Activated CD8-positive, alpha-beta T cell treated with anti-CD3 and anti-CD28 coated beads for 36 hours (primary cell): ENCODE measurements at regions of chr17 and their contacts with region 1.

Region 1: DNA sequence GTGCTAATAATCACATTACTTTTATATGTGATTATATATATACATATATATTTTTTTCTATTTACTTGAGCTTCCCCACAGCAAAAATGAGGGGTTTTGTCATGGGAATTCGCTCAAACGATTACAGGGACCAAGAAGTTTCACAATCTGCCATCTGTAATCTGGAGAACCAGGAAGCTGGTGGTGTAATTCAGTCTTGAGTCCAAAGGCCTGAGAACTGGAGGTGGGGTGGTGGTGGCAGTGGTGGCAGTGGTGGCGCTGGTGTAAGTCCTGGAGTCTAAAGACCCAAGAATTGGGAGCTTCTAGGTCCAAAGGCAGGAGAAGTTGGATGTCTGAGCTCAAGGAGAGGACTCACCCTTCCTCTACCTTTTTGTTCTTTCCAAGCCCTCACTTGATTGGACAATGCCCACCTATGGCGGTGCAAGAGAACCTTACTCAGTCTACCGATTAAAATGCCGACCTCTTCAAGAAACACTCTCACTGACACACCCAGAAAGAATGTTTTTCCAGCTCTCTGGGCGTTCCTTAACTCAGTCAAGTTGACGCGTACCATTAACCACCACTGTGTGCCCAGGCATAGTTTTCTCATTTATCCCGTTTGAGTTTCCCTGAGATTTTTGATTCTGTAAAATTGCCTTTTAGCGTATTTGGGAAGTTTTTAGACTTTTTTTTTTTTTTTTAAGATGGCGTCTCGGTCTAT is 31.9 kb downstream of the POLR2A start:
- DNase-seq: no peak
- ATAC-seq: no peak
- H3K4me3 Mint-ChIP-seq: no peak overlapping the region
- H3K27ac Mint-ChIP-seq: no peak overlapping the region
- H3K4me1 Mint-ChIP-seq: no peaks in the 10 kb centered on the region
- H3K27me3 Mint-ChIP-seq: no peaks in the 10 kb centered on the region
- CTCF ChIP-seq: no peak

Region 2: GRCh38 chr17:7491583-7491982 is 24.5 kb before region 1 on chr17:
- CTCF ChIA-PET with region 1: interaction called, 23 read pairs
- POLR2A ChIA-PET with region 1: interaction called, 4 read pairs
- intact Hi-C with region 1: no loop called
- DNase-seq: no peak
- ATAC-seq: no peak
- H3K4me3 Mint-ChIP-seq: no peak overlapping the region
- H3K27ac Mint-ChIP-seq: peak overlapping the region; percentile 40
- H3K4me1 Mint-ChIP-seq: peaks cover 57% of the 10 kb centered on the region
- H3K27me3 Mint-ChIP-seq: no peaks in the 10 kb centered on the region
- CTCF ChIP-seq: no peak

Region 3: DNA sequence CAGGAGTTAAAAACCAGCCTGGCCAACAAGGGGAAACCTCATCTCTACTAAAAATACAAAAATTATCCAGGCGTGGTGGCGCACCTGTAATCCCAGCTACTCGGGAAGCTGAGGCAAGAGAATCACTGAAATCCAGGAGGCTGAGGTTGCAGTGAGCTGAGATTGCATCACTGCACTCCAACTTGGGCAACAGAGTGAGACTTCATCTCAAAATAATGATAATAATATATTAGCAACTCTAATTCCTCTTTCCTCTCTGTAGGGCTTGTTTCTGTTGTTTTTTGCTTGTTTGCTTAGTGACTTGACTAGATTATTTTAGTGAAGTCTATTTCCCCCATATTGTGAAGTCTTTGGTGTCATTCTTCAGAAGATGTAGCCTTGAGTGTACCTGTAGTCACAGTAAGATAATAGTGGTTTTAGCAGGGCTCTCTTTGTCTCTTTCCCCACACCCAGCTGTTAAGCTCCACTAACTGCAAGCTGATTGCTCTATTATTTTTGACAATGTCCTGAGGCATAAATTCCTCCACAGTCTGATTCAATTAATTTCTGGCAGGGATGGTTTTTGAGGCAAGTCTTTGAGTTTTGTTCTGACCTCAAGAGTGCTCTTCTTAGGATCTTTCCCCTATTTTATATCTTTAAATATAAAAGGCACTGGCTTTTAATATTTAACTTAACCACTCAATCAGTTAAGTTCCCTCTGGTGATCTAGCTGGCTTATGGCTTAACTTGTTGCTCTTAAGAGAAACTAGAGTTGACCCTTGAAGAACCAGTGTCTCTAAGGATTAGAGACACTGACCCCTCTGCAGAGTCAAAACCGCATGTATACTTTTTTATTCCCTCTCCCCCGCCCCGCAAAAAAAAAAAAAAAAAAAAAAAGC is 14.2 kb after region 1 on chr17:
- CTCF ChIA-PET with region 1: interaction called, 31 read pairs
- POLR2A ChIA-PET with region 1: interaction called, 7 read pairs
- intact Hi-C with region 1: no loop called
- DNase-seq: no peak
- ATAC-seq: no peak
- H3K4me3 Mint-ChIP-seq: no peak overlapping the region
- H3K27ac Mint-ChIP-seq: no peak overlapping the region
- H3K4me1 Mint-ChIP-seq: no peaks in the 10 kb centered on the region
- H3K27me3 Mint-ChIP-seq: no peaks in the 10 kb centered on the region
- CTCF ChIP-seq: no peak

Region 4: DNA sequence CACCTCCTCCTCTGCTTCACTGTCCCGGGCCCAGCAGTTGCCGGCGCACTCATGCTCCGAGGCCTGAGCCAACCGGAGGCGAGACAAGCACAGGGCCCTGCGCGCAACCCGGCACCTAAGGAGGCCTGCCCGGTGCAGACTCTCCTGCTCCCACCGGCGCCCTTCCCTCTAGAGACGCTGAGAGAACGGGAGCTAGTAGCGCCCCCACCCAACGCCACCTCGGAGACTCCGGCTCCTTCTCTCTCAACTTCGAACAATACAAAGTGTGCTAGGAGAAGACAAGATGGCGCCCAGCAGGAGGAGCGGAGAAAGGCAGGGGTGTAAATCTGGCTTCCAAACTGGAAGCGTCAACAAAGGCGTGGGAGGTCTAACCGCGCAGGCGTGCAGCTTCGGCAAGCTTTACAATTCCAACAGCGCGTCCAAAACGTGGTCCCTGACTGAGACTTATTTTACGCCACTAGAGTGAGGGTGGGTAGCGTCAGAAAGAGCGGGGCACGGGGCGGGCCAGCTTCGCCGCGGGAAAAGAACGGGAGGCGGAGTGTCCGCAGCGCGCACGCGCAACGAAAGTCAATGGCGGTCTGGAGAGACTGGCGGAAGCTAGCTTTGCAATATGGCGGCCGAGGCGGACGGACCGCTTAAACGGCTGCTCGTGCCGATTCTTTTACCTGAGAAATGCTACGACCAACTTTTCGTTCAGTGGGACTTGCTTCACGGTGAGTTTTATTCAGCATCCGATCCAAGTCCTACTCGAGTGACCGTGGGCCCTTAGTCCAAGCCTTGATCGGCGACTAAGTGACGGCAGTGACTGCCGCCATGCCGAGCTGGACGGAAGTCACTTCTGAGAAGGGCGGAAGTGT is 67.4 kb after region 1 on chr17 and contains the start of gene MPDU1:
- CTCF ChIA-PET with region 1: interaction called, 17 read pairs
- POLR2A ChIA-PET with region 1: interaction called, 3 read pairs
- intact Hi-C with region 1: no loop called
- DNase-seq: peak; percentile 97
- ATAC-seq: peak; percentile 77
- H3K4me3 Mint-ChIP-seq: peak within 1 kb of the TSS; percentile 94
- H3K27ac Mint-ChIP-seq: peak within 1 kb of the TSS; percentile 99
- H3K4me1 Mint-ChIP-seq: peaks cover 55% of the 10 kb centered on the region
- H3K27me3 Mint-ChIP-seq: no peaks in the 10 kb centered on the region
- CTCF ChIP-seq: no peak
- total RNA-seq, gene MPDU1: 50.9 to 51.4 TPM